GM10248 (cell line): ENCODE measurements at regions of chr4 and their contacts with region 1.

Region 1: DNA sequence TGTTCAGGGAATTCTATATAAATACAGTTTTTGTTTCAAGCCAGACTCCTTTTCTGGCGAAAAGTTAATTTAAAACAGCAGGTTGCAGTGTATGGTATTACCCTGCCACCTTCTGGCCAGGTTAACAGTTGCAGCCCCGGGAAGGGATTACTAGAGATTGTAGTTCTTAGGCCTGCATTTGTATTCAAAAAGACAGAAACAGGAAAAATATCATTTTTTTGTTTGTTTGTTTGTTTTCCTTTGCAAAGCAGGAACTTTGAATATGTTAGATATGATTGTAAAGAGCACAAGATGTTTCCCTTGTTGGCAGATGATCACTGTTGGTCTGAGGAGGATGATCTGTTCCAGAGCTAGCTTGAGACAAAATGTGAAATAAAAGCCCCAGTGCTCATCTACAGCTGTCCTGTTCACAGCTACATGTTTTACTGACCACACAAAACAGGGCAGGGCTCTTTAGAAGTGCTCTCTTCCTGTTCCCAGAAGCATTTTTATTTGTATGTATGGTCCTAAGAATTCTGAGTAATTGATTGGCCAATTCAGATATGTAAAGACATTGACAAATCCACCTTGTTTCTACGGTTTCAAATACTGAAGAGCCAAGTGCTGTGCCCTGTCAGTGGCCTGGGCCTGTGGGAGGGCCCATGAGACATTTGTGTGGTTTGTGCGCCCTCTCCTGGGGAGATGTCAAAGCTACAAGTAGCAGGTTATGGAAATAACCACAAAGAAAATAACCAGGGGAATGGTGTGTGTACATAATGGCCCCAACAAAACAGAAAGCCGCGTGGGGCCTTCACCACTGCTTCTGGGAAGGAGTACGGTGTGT is 57.9 kb downstream of the CLDN22 start:
- DNase-seq: peak; percentile 70
- CTCF ChIP-seq: peak; percentile 87

Region 2: DNA sequence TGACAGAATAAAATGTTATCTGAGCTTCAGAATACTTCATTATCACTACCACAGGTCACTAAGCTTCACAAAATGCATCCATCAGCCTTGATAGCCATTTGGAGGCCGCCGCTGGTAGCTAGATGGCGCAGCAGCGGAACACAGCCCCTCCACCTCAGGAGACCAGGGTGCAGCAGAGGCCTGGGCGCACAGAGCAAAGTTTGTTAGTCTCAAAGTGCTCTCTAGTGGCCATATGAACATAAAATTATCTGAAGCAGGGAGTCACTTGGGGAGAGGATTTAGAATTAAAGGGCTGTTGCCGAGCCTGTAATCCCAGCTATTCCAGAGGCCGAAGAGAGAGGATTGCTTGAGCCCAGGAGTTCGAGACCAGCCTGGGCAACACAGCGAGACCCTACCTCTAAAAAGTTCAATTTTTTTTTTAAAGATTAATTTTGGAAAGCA is 336.8 kb before region 1 on chr4:
- CTCF ChIA-PET with region 1: interaction called, 47 read pairs
- POLR2A ChIA-PET with region 1: no interaction called
- DNase-seq: peak; percentile 48
- CTCF ChIP-seq: peak; percentile 90

Region 3: DNA sequence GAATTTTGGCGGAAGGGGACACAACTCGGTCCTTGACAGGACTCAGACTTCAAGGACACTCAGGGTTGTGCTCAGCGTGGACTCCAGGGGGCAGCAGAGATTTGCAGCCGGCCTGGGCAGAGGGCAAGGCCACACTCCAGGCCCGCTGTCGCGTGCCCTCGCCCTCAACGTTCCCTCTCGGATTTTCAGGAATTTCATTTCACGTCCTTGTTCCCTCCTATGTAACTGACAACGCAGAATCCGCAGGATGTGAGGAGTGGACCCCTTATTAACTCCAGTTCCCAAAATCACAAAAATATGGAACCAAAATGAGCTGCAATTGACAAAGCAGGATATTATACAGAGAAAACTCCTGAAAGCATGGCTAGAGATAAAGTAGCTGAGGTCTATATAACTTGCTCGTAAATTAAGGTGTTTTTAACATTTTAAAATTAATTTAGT is 323.9 kb before region 1 on chr4:
- CTCF ChIA-PET with region 1: interaction called, 196 read pairs
- POLR2A ChIA-PET with region 1: no interaction called
- DNase-seq: peak; percentile 77
- CTCF ChIP-seq: peak; percentile 96

Region 4: GRCh38 chr4:183080372-183081115 is 181.6 kb before region 1 on chr4:
- CTCF ChIA-PET with region 1: interaction called, 87 read pairs
- POLR2A ChIA-PET with region 1: no interaction called
- DNase-seq: no peak
- CTCF ChIP-seq: no peak

Region 5: GRCh38 chr4:183249857-183250256 is 12.3 kb before region 1 on chr4:
- CTCF ChIA-PET with region 1: interaction called, 55 read pairs
- POLR2A ChIA-PET with region 1: no interaction called
- DNase-seq: peak; percentile 17
- CTCF ChIP-seq: peak; percentile 20

Region 6: DNA sequence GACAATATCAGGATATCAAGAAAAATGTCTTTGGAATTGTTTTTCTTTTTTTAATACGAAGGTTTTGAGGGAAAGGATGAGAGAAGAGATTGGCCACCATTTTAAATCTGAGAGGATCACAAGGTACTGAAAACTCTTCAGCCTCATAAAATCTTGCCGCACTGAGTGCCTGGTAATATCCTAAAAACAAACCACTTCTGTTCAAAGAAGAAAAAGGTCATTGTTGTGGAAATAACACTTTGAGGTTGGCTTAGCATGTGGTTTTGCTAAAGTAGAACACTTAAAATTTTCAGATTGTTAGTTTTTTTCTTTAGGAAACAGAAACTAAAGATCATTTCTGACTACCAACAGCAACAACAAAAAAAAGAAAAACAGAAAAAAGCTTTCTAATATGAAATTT is 58.9 kb after region 1 on chr4:
- CTCF ChIA-PET with region 1: no interaction called
- POLR2A ChIA-PET with region 1: no interaction called
- DNase-seq: no peak
- CTCF ChIP-seq: no peak